ENCODE measurements at regions of chr3 and their contacts with region 1.

Region 1: DNA sequence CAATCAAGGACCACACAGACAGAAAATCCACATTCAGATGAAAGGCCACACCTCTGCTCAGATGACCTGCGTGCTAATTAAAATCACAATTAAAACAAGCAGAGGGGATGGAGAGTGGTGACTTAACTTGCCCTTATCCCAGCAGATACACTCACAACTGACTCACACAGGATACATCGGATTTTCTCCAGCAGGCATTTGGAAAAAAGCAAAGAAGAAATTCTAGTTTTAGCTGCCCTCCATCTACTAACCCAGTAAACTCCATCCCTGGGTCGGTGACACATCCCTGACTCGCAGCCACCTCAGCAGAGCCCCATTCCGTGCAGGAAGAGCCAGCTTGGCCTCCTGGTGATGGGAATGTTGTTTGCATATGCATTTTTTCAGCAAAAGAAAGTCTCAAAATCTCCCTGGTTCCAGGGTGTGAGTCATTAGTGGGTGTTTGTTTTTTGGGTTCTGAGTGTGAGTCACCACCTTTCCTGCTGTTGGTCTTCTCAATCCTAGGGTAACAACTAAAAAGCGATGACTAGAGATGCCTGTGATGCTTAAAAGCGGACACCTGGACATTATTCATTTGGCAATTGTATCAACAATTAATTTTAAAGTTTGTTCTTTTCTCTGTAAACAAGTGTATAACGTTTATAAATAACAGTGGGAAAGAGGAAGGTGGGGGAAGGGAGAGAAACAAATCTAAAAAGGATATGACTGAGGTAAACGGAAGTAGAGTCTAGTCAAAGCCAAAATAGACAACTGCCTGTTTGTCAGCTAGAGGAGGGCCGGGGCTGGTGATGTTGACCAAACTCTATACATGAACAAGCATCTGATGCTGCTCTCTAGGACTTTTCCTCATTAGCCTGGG is 49.8 kb upstream of the SLC4A7 start:
- DNase-seq: peak; percentile 99
- ATAC-seq: peak; percentile 85
- H3K4me3 ChIP-seq: peak overlapping the region; percentile 34; the same call in 1 of the 2 replicates
- H3K27ac ChIP-seq: peak overlapping the region; percentile 97
- H3K4me1 ChIP-seq: peaks cover 41% of the 10 kb centered on the region
- H3K27me3 ChIP-seq: no peaks in the 10 kb centered on the region
- CTCF ChIP-seq: peak; percentile 42; the same call in 1 of the 2 replicates

Region 2: DNA sequence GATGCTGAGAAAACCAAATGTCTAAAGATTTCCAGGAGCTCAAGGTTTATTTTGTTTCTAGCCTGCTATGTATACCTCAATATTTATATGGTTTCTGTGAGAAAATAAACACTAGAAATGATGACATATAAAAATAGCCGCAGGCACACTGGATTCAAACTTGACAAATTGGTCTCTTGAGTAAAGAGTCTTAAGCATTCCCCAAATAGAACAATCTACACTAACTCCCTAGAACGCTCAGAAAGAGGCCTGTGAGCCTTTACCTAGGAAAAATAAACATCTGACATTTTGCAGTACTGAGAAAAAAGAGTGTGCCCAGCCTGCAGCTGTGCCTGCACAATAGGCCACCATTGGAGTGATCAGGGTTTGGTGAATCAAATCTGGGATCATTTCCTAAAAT is 240.0 kb before region 1 on chr3:
- CTCF ChIA-PET with region 1: no interaction called
- POLR2A ChIA-PET with region 1: no interaction called
- intact Hi-C with region 1: no loop called
- DNase-seq: peak; percentile 41
- ATAC-seq: peak; percentile 18; the same call in 1 of the 2 replicates
- H3K4me3 ChIP-seq: no peak overlapping the region
- H3K27ac ChIP-seq: no peak overlapping the region
- H3K4me1 ChIP-seq: peaks cover 13% of the 10 kb centered on the region
- H3K27me3 ChIP-seq: no peaks in the 10 kb centered on the region
- CTCF ChIP-seq: no peak

Region 3: GRCh38 chr3:27368831-27369607 is 164.9 kb before region 1 on chr3 and contains the start of gene NEK10:
- CTCF ChIA-PET with region 1: no interaction called
- POLR2A ChIA-PET with region 1: no interaction called
- intact Hi-C with region 1: no loop called
- DNase-seq: peak; percentile 97
- ATAC-seq: peak; percentile 97
- H3K4me3 ChIP-seq: peak within 1 kb of the TSS; percentile 86
- H3K27ac ChIP-seq: no peak within 1 kb of the TSS
- H3K4me1 ChIP-seq: no peaks in the 10 kb centered on the region
- H3K27me3 ChIP-seq: no peaks in the 10 kb centered on the region
- CTCF ChIP-seq: no peak
- total RNA-seq, gene NEK10: 0.98 and 1.7 TPM in 2 replicates

Region 4: GRCh38 chr3:27484015-27484844 is 49.7 kb before region 1 on chr3 and contains the start of gene SLC4A7:
- CTCF ChIA-PET with region 1: no interaction called
- POLR2A ChIA-PET with region 1: no interaction called
- intact Hi-C with region 1: loop called (anchors 1 kb)
- DNase-seq: peak; percentile 97
- ATAC-seq: peak; percentile 85
- H3K4me3 ChIP-seq: peak within 1 kb of the TSS; percentile 88
- H3K27ac ChIP-seq: peak within 1 kb of the TSS; percentile 59
- H3K4me1 ChIP-seq: peaks cover 33% of the 10 kb centered on the region
- H3K27me3 ChIP-seq: no peaks in the 10 kb centered on the region
- CTCF ChIP-seq: no peak
- total RNA-seq, gene SLC4A7: 56.0 and 59.7 TPM in 2 replicates

Region 5: GRCh38 chr3:27521179-27521871 is 12.6 kb before region 1 on chr3:
- CTCF ChIA-PET with region 1: no interaction called
- POLR2A ChIA-PET with region 1: no interaction called
- intact Hi-C with region 1: loop called (anchors 1 kb)
- DNase-seq: peak; percentile 90
- ATAC-seq: peak; percentile 70
- H3K4me3 ChIP-seq: no peak overlapping the region
- H3K27ac ChIP-seq: peak overlapping the region; percentile 64
- H3K4me1 ChIP-seq: peaks cover 43% of the 10 kb centered on the region
- H3K27me3 ChIP-seq: no peaks in the 10 kb centered on the region
- CTCF ChIP-seq: no peak

Region 6: GRCh38 chr3:27596334-27596841 is 62.4 kb after region 1 on chr3:
- CTCF ChIA-PET with region 1: no interaction called
- POLR2A ChIA-PET with region 1: no interaction called
- intact Hi-C with region 1: loop called (anchors 2 kb)
- DNase-seq: peak; percentile 69
- ATAC-seq: peak; percentile 84
- H3K4me3 ChIP-seq: no peak overlapping the region
- H3K27ac ChIP-seq: peak overlapping the region; percentile 61
- H3K4me1 ChIP-seq: peaks cover 25% of the 10 kb centered on the region
- H3K27me3 ChIP-seq: no peaks in the 10 kb centered on the region
- CTCF ChIP-seq: no peak

Region 7: DNA sequence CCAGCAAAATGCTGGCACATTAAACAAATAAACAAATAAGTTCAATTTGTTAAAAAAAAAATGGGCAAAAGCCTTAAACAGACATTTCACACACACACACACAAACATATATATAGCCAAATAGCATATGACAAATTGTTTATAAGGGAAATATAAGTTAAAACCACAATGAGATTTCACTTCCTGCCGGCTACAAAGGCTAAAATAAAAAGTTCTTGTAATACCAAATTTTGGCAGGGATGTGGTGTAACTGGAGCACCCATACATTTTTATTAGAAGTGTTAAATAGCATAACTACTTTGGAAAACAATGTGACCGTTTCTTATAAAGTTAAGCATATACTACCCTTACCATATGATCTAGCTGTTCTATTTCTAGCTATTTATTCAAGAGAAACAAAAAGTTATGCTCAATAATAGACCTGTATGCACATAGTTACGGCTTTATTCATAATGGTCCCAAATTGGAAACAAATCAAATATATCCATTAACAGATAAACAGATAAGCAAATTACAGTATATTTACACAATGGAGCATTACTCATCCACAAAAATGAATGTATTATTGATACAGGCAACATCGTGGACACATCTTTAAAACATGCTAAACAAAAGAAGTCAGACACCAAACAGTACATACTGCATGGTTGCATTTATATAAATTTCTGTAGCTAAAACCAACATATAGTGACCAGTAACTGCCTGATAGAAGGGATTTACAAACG is 94.2 kb after region 1 on chr3:
- CTCF ChIA-PET with region 1: interaction called, 3 read pairs
- POLR2A ChIA-PET with region 1: interaction called, 8 read pairs
- intact Hi-C with region 1: loop called (anchors 1 kb)
- DNase-seq: peak; percentile 91
- ATAC-seq: peak; percentile 69
- H3K4me3 ChIP-seq: 0 out of 2 replicates have a peak overlapping the region, but pooled peaks have one; percentile 0
- H3K27ac ChIP-seq: peak overlapping the region; percentile 80
- H3K4me1 ChIP-seq: peaks cover 66% of the 10 kb centered on the region
- H3K27me3 ChIP-seq: no peaks in the 10 kb centered on the region
- CTCF ChIP-seq: no peak